ENCODE measurements at regions of chr9 and their contacts with region 1.

Region 1: GRCh38 chr9:14768405-14769229 is 46.1 kb upstream of the CER1 start:
- DNase-seq: no peak
- H3K4me3 ChIP-seq: no peak overlapping the region
- H3K27ac ChIP-seq: no peak overlapping the region
- H3K4me1 ChIP-seq: peaks cover 0 to 4% (median 0%) of the 10 kb centered on the region in 3 donors
- H3K27me3 ChIP-seq: no peaks in the 10 kb centered on the region
- CTCF ChIP-seq: peak; percentile 55 to 77 (median 66)
- POLR2A ChIP-seq: no peak

Region 2: DNA sequence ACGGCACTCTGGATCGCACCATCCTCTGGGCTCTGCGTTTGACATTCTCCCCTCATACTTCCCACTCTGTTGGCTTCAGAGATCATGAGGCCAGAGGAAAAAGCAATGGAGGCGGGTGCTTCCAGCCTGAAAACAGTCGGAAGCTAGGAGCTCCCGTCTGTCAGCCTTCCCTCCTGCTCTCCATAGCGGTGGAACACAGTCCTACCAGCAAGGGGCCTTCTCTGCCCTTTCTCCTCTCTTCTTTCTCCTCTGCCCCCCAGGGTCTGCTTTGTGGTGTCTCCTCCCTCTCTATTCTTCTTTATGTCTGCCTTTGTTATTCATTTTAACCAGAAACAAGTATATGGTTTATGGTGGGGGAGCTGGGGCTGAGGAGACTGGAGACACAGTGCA is 302.2 kb before region 1 on chr9:
- intact Hi-C with region 1: loop called (anchors 10 kb)
- DNase-seq: no peak
- H3K4me3 ChIP-seq: no peak overlapping the region
- H3K27ac ChIP-seq: no peak overlapping the region
- H3K4me1 ChIP-seq: peaks cover 0 to 9% (median 0%) of the 10 kb centered on the region in 3 donors
- H3K27me3 ChIP-seq: no peaks in the 10 kb centered on the region
- CTCF ChIP-seq: no peak
- POLR2A ChIP-seq: no peak

Region 3: GRCh38 chr9:14616188-14616982 is 152.2 kb before region 1 on chr9:
- intact Hi-C with region 1: loop called (anchors 10 kb)
- DNase-seq: no peak
- H3K4me3 ChIP-seq: no peak overlapping the region
- H3K27ac ChIP-seq: no peak overlapping the region
- H3K4me1 ChIP-seq: no peaks in the 10 kb centered on the region
- H3K27me3 ChIP-seq: no peaks in the 10 kb centered on the region
- CTCF ChIP-seq: peak in 4 of 6 experiments; percentile 35 to 70 (median 50)
- POLR2A ChIP-seq: no peak

Region 4: GRCh38 chr9:14813336-14814180 is 44.9 kb after region 1 on chr9:
- intact Hi-C with region 1: no loop called
- DNase-seq: no peak
- H3K4me3 ChIP-seq: no peak overlapping the region
- H3K27ac ChIP-seq: no peak overlapping the region
- H3K4me1 ChIP-seq: no peaks in the 10 kb centered on the region
- H3K27me3 ChIP-seq: no peaks in the 10 kb centered on the region
- CTCF ChIP-seq: no peak
- POLR2A ChIP-seq: no peak

Region 5: GRCh38 chr9:15010581-15010980 is 242.0 kb after region 1 on chr9:
- intact Hi-C with region 1: no loop called
- DNase-seq: no peak
- H3K4me3 ChIP-seq: no peak overlapping the region
- H3K27ac ChIP-seq: no peak overlapping the region
- H3K4me1 ChIP-seq: no peaks in the 10 kb centered on the region
- H3K27me3 ChIP-seq: no peaks in the 10 kb centered on the region
- CTCF ChIP-seq: no peak
- POLR2A ChIP-seq: no peak